HCT116 (cell line): ENCODE measurements at regions of chr7 and their contacts with region 1.

Region 1: GRCh38 chr7:100469227-100470044 is 5.4 kb upstream of the SPACDR start:
- DNase-seq: no peak
- ATAC-seq: peak; percentile 85
- H3K4me3 ChIP-seq: no peak overlapping the region
- H3K27ac ChIP-seq: peak overlapping the region; percentile 52
- H3K4me1 ChIP-seq: peaks cover 22 to 43% of the 10 kb centered on the region in 2 experiments
- H3K27me3 ChIP-seq: no peaks in the 10 kb centered on the region
- CTCF ChIP-seq: peak; percentile 80 to 95 (median 91)
- POLR2A ChIP-seq: no peak
- RAD21 ChIP-seq: peak; percentile 93

Region 2: GRCh38 chr7:100570954-100571828 is 101.8 kb after region 1 on chr7:
- CTCF ChIA-PET with region 1: no interaction called
- POLR2A ChIA-PET with region 1: no interaction called
- RAD21 ChIA-PET with region 1: no interaction called
- intact Hi-C with region 1: no loop called
- DNase-seq: no peak
- ATAC-seq: 0 out of 2 replicates have a peak, but pooled peaks have one; percentile 16
- H3K4me3 ChIP-seq: no peak overlapping the region
- H3K27ac ChIP-seq: peak overlapping the region; percentile 10; the same call in 1 of the 2 replicates
- H3K4me1 ChIP-seq: peaks cover 17 to 49% of the 10 kb centered on the region in 2 experiments
- H3K27me3 ChIP-seq: no peaks in the 10 kb centered on the region
- CTCF ChIP-seq: no peak
- POLR2A ChIP-seq: no peak
- RAD21 ChIP-seq: no peak

Region 3: DNA sequence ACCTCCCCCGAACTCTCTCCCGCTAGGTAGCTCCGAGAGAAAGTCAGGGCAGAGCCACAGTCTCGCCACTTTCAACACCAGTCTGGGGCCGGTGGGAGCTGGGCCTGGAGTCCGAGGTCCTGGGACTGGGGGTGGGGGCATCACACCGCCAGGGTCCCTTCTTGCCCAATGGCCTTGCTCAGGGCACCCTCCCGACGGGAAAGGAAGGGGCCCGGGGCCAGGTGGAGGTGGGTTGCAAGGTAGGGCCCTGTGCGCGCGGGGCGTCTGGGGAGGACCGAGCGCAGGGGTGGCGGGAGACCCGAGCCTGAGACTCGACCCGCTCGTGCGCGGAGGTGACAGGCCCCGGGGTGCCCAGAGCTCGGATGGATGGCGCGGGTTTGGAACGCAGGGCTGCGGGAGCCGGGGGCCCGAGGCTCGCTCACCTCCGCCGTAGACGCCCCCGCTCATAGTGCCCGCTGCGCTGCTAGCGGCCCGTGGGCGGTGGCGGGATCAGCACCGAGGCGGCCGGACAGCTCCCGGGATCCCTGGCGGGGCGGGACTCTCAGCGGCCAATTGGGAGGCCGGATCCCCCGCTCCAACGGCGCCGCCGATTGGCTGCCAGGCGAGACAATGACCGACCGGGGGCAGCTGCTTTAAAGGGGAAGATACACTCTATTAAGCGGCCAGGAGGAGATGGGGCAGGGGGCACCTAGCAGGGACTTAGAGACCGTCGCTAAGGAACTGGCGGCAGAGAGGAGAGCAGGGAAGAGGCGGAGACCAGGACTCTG is 186.7 kb after region 1 on chr7 and contains the start of gene ACTL6B:
- CTCF ChIA-PET with region 1: no interaction called
- POLR2A ChIA-PET with region 1: no interaction called
- RAD21 ChIA-PET with region 1: no interaction called
- intact Hi-C with region 1: no loop called
- DNase-seq: no peak
- ATAC-seq: peak; percentile 80
- H3K4me3 ChIP-seq: no peak within 1 kb of the TSS
- H3K27ac ChIP-seq: no peak within 1 kb of the TSS
- H3K4me1 ChIP-seq: no peaks in the 10 kb centered on the region
- H3K27me3 ChIP-seq: no peaks in the 10 kb centered on the region
- CTCF ChIP-seq: no peak
- POLR2A ChIP-seq: no peak
- RAD21 ChIP-seq: no peak
- total RNA-seq, gene ACTL6B: not detected

Region 4: GRCh38 chr7:100691676-100692577 is 222.5 kb after region 1 on chr7:
- CTCF ChIA-PET with region 1: interaction called, 3 read pairs
- POLR2A ChIA-PET with region 1: no interaction called
- RAD21 ChIA-PET with region 1: no interaction called
- intact Hi-C with region 1: loop called (anchors 2 kb)
- DNase-seq: no peak
- ATAC-seq: peak; percentile 80
- H3K4me3 ChIP-seq: peak overlapping the region; percentile 87 to 89
- H3K27ac ChIP-seq: peak overlapping the region; percentile 47
- H3K4me1 ChIP-seq: peaks cover 18 to 33% of the 10 kb centered on the region in 2 experiments; a peak in 3 of 4 replicates
- H3K27me3 ChIP-seq: no peaks in the 10 kb centered on the region
- CTCF ChIP-seq: peak; percentile 89 to 94 (median 91)
- POLR2A ChIP-seq: no peak
- RAD21 ChIP-seq: peak; percentile 87

Region 5: DNA sequence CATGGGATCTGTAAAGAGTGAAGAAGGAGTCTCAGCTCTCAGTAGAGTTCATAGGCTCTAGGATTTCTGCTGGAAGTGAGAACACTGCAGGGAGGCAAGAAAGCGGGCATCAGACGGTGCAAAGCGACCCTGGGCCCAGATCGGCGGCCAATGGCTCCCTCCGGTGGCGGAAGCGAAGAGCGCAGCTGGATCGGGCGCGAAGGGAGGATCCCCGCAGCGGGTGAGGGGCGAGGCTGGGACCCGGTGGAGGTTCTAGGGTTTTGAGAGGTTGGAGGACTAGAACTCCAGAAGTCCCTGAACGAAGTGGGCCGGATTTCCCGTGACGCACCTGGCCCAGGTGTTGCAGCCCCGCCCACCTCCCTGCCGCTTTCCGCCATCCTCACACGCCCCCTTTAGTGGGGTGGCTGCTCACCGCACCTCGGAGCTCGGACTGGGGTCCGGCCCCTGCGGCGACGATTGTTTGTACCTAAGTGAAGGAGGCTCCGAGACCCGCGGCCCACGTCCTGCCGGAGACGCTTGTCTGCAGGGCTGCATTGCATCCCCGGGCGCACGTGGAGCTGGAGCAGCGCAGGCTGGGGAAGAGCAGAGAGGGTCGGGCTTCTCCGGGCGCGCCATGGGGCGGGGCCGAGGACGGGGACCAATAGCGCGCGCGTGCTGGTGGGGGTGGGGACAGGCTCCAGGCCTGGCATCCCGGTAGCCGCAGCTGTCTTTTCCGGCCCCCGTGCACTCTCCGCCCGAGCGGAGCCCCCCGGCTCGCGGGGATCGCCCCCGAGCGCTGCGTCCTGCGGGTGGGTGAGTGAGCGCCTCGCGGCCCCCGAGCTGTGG is 382.8 kb after region 1 on chr7 and contains the start of gene SLC12A9:
- CTCF ChIA-PET with region 1: interaction called, 3 read pairs
- POLR2A ChIA-PET with region 1: no interaction called
- RAD21 ChIA-PET with region 1: no interaction called
- intact Hi-C with region 1: loop called (anchors 2 kb)
- DNase-seq: peak; percentile 81
- ATAC-seq: peak; percentile 97
- H3K4me3 ChIP-seq: peak within 1 kb of the TSS; percentile 83 to 84
- H3K27ac ChIP-seq: peak within 1 kb of the TSS; percentile 63
- H3K4me1 ChIP-seq: peaks cover 6 to 16% of the 10 kb centered on the region in 2 experiments; a peak in 3 of 4 replicates
- H3K27me3 ChIP-seq: no peaks in the 10 kb centered on the region
- CTCF ChIP-seq: peak; percentile 84 to 95 (median 94)
- POLR2A ChIP-seq: peak; percentile 17
- RAD21 ChIP-seq: peak; percentile 99
- total RNA-seq, gene SLC12A9: 24.6 TPM